Esophagus muscularis mucosa (tissue), 4 donors: ENCODE measurements at regions of chr7 and their contacts with region 1.

Region 1: DNA sequence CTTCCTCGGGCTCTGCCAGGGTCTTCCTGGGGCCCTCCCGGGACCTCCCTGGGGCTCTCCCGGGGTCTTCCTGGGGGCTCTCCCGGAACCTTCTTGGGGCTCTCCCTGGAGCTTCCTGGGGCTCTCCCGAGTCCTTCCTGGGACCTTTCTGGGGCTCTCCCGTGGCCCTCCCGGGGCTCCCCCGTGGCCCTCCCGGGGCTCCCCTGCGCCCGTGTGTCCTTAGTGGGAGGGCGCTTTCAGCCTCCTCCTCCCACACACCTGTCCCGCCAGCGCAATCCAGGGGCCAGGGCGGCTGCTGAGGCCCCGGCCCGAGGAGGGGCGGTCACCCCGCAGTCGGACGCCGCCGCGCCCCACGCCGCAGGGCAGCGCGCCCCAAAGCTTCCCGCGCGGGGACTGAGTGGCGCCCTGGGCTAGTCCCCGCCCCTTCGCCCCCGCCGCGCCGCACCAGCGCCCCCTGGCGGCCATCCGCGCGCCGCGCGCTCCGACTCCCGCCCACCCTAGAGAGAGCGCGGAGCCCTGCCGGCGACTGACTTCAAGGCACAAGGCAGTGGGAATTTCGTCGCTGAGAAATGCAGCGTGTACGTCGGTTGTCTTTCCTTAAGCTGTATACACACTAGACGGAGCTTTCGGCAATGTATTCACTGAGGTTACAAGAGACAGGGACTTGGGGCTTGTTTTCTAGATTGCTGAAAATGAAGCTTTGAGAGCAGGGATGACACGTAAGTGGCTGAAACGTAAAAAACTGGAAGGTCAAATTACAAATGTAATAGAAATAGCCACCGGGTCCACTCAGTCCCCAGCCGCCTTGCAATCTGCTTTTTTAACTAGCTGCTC is 47.1 kb downstream of the INSIG1 start:
- DNase-seq: no peak
- H3K4me3 ChIP-seq: peak overlapping the region; percentile 43 to 61 (median 50)
- H3K27ac ChIP-seq: no peak overlapping the region
- H3K4me1 ChIP-seq: peaks cover 4 to 15% (median 12%) of the 10 kb centered on the region in 4 donors
- H3K27me3 ChIP-seq: peaks cover 0 to 50% (median 0%) of the 10 kb centered on the region in 4 donors
- CTCF ChIP-seq: peak in 2 of 3 experiments; percentile 89 to 98
- EP300 ChIP-seq: no peak
- POLR2A ChIP-seq: no peak

Region 2: GRCh38 chr7:154913638-154914312 is 431.0 kb before region 1 on chr7:
- intact Hi-C with region 1: loop called (anchors 5 kb)
- DNase-seq: no peak
- H3K4me3 ChIP-seq: peak overlapping the region; percentile 39 to 48 (median 44)
- H3K27ac ChIP-seq: no peak overlapping the region
- H3K4me1 ChIP-seq: peaks cover 8 to 15% (median 11%) of the 10 kb centered on the region in 4 donors
- H3K27me3 ChIP-seq: peaks cover 0 to 58% (median 4%) of the 10 kb centered on the region in 4 donors
- CTCF ChIP-seq: peak in 2 of 3 experiments; percentile 81
- EP300 ChIP-seq: no peak
- POLR2A ChIP-seq: no peak

Region 3: GRCh38 chr7:155190688-155191087 is 154.1 kb before region 1 on chr7:
- intact Hi-C with region 1: loop called (anchors 1 kb)
- DNase-seq: no peak
- H3K4me3 ChIP-seq: peak overlapping the region in 1 of 4 donors; percentile 12
- H3K27ac ChIP-seq: no peak overlapping the region
- H3K4me1 ChIP-seq: peaks cover 0 to 8% (median 8%) of the 10 kb centered on the region in 4 donors
- H3K27me3 ChIP-seq: peaks cover 0 to 50% (median 0%) of the 10 kb centered on the region in 4 donors
- CTCF ChIP-seq: peak; percentile 82 to 90 (median 86)
- EP300 ChIP-seq: no peak
- POLR2A ChIP-seq: no peak